ENCODE measurements at regions of chr22 and their contacts with region 1.

Region 1: GRCh38 chr22:22316589-22316988 is 72.0 kb downstream of the VPREB1 start:
- DNase-seq: no peak
- H3K4me3 Mint-ChIP-seq: no peak overlapping the region
- H3K27ac Mint-ChIP-seq: no peak overlapping the region
- H3K4me1 Mint-ChIP-seq: no peaks in the 10 kb centered on the region
- H3K27me3 Mint-ChIP-seq: no peaks in the 10 kb centered on the region

Region 2: GRCh38 chr22:22342697-22343580 is 26.4 kb after region 1 on chr22:
- CTCF ChIA-PET with region 1: interaction called, 10 read pairs
- intact Hi-C with region 1: no loop called
- DNase-seq: peak; percentile 82
- H3K4me3 Mint-ChIP-seq: no peak overlapping the region
- H3K27ac Mint-ChIP-seq: no peak overlapping the region
- H3K4me1 Mint-ChIP-seq: no peaks in the 10 kb centered on the region
- H3K27me3 Mint-ChIP-seq: no peaks in the 10 kb centered on the region